ENCODE measurements at regions of chr19 and their contacts with region 1.

Region 1: DNA sequence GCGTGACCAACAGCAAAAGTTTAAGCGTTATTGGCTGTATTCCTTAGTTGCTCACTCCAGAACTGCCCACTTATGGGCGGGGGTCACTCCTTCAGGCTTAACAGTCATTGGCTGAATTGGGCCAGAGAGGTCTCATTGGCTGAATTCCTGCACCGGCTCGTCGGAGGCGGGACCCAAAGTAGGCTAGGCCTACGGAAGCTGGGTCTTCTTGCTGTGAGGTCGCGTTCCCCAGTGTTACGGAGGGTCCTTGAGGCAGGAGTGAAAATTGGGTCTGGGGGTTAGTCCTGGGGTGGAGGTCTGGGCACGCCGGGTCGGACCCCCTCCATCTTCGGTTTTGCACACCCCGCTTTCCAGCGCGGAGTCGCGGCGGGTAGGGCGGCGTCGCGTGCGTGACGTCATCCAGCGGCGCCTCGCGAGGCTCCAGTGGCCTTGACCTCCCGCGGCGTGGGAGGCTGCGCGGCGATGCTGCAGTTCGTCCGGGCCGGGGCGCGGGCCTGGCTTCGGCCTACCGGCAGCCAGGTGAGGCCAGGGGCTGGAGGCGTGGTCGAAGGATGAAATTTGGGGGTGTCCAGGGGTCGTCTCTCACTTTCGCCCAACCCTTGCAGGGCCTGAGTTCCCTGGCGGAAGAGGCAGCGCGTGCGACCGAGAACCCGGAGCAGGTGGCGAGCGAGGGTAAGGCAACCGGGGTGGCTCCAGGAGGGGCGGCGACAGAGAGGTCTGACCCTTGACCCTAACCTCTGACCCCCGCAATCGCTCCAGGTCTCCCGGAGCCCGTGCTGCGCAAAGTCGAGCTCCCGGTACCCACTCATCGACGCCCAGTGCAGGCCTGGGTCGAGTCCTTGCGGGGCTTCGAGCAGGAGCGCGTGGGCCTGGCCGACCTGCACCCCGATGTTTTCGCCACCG is at the start of gene MRPL4:
- DNase-seq: peak; percentile 98
- H3K4me3 ChIP-seq: peak within 1 kb of the TSS; percentile 54 to 85 (median 85)
- H3K27ac ChIP-seq: peak within 1 kb of the TSS; percentile 45 to 65 (median 52)
- H3K4me1 ChIP-seq: peaks cover 0 to 7% of the 10 kb centered on the region in 2 donors
- H3K27me3 ChIP-seq: no peaks in the 10 kb centered on the region
- CTCF ChIP-seq: peak in 1 of 6 experiments; percentile 20
- POLR2A ChIP-seq: peak in 1 of 2 donors; percentile 54
- total RNA-seq, gene MRPL4: 36.1 to 81.7 (median 54.9) TPM

Region 2: DNA sequence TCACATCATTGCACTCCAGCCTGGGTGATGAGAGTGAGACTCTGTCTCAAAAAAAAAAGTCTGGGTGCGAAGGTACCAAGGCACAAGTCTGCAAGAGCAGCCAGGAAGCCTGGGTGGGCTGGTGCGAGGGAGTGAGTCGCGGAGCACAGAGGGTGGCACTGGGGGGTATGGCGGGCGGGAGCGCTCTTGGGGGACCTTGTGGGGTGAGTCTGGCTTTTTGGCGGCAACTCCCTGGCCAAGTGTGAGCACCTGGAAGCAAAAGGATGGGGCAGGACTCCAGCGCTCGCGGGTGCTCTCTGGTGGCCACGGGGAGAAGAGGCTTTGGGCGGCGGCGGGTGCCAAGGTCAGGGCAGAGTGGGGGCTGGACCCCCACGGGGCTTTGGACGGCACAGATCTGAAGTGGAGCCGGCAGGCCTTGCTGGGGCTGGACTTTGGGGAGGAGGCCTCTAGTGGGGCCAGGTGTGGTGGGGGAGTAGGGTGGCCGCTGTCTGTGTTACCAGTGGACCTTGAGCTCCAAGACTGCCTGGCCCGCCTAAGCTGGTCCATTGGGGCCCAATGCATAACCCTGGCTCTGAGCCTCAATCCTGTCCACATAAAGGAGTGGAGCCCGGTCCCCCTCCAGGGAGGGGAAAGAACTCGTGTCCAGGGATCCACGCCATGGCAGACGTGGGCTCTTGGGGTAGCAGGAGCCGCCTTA is 139.0 kb before region 1 on chr19:
- intact Hi-C with region 1: loop called (anchors 10 kb)
- DNase-seq: peak in 1 of 2 donors; percentile 37
- H3K4me3 ChIP-seq: no peak overlapping the region
- H3K27ac ChIP-seq: no peak overlapping the region
- H3K4me1 ChIP-seq: no peaks in the 10 kb centered on the region
- H3K27me3 ChIP-seq: no peaks in the 10 kb centered on the region
- CTCF ChIP-seq: peak in 4 of 6 experiments; percentile 18 to 59 (median 38)
- POLR2A ChIP-seq: no peak

Measured in thyroid gland (tissue), 4 donors.